Esophagus muscularis mucosa (tissue), 4 donors: ENCODE measurements at regions of chr11 and their contacts with region 1.

Region 1: DNA sequence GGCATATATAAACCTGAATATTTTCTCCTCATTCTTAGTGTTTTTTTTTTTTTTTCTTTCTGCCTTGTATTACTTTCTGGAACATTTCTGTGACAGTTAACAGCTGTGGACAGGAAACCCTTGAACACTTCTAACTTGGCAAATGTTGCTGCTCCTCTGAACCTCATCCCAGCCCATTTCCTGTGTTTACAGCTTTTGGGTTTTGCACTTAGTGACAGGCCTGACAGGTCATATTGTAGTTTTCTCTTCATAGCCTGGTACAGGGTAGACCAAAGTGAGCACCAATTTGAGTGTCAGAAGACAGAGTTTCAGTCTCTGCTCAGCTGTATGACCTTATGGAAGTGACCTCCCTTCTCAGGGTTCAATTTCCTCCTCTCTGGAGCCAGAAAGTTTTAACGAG is 91.6 kb downstream of the STIM1 start:
- DNase-seq: no peak
- H3K4me3 ChIP-seq: no peak overlapping the region
- H3K27ac ChIP-seq: peak overlapping the region; percentile 75 to 84 (median 80)
- H3K4me1 ChIP-seq: peaks cover 87 to 100% (median 95%) of the 10 kb centered on the region in 4 donors
- H3K27me3 ChIP-seq: no peaks in the 10 kb centered on the region
- CTCF ChIP-seq: no peak
- EP300 ChIP-seq: no peak
- POLR2A ChIP-seq: no peak

Region 2: DNA sequence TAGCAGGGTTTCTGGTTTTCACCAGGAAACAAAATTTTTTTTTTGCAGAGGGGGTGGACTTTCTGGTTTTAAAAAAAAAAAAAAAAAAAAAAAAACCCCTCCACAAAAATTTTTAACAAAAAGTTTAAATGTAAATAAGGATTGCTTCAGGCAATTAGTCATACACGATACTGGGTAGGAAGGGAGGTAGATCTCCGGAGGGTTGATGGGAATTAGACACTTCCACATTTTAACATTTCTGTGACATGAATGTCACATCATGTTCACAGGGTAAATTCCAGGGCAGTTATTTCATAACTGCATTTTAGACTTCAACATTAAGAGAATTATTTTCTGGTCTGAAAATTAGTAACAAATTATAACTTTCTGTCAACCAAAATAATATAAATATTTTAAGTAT is 165.6 kb before region 1 on chr11:
- intact Hi-C with region 1: no loop called
- DNase-seq: no peak
- H3K4me3 ChIP-seq: no peak overlapping the region
- H3K27ac ChIP-seq: peak overlapping the region in 2 of 4 donors; percentile 4 to 63
- H3K4me1 ChIP-seq: peaks cover 0 to 41% (median 37%) of the 10 kb centered on the region in 4 donors
- H3K27me3 ChIP-seq: no peaks in the 10 kb centered on the region
- CTCF ChIP-seq: no peak
- EP300 ChIP-seq: no peak
- POLR2A ChIP-seq: no peak

Region 3: GRCh38 chr11:3984896-3985295 is 37.8 kb after region 1 on chr11:
- intact Hi-C with region 1: no loop called
- DNase-seq: no peak
- H3K4me3 ChIP-seq: no peak overlapping the region
- H3K27ac ChIP-seq: no peak overlapping the region
- H3K4me1 ChIP-seq: peaks cover 9 to 90% (median 60%) of the 10 kb centered on the region in 4 donors
- H3K27me3 ChIP-seq: no peaks in the 10 kb centered on the region
- CTCF ChIP-seq: no peak
- EP300 ChIP-seq: no peak
- POLR2A ChIP-seq: no peak

Region 4: DNA sequence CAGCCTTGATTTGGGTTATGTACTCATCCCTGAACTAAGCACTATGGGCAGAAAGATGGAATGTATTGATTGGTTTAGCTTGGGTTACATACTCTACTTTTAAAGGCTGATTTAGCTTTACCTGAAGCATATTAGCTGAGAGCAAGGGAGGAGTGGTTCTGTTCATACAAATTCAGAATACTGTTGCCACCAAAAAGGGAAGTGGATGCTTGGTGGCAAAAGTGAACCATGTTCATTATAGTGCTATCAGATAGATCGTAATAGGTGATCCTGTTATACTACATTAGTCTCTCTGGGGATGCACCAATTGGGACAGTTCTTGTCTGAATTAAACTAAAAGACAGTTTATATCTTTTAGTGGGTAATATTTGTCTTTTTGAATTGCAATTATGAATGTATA is 103.1 kb after region 1 on chr11:
- intact Hi-C with region 1: loop called (anchors 10 kb)
- DNase-seq: no peak
- H3K4me3 ChIP-seq: no peak overlapping the region
- H3K27ac ChIP-seq: no peak overlapping the region
- H3K4me1 ChIP-seq: peaks cover 4 to 16% (median 11%) of the 10 kb centered on the region in 4 donors
- H3K27me3 ChIP-seq: no peaks in the 10 kb centered on the region
- CTCF ChIP-seq: no peak
- EP300 ChIP-seq: no peak
- POLR2A ChIP-seq: no peak